Activated CD4-positive, alpha-beta T cell treated with anti-CD3 and anti-CD28 coated beads for 36 hours (primary cell): ENCODE measurements at regions of chr9 and their contacts with region 1.

Region 1: GRCh38 chr9:33881635-33882034 is 64.7 kb downstream of the UBE2R2 start:
- DNase-seq: no peak
- ATAC-seq: peak; percentile 79
- H3K4me3 Mint-ChIP-seq: peak overlapping the region; percentile 23
- H3K27ac Mint-ChIP-seq: peak overlapping the region; percentile 93
- H3K4me1 Mint-ChIP-seq: peaks cover 65% of the 10 kb centered on the region
- H3K27me3 Mint-ChIP-seq: no peaks in the 10 kb centered on the region

Region 2: GRCh38 chr9:33800886-33801285 is 80.7 kb before region 1 on chr9:
- CTCF ChIA-PET with region 1: no interaction called
- POLR2A ChIA-PET with region 1: no interaction called
- intact Hi-C with region 1: no loop called
- DNase-seq: no peak
- ATAC-seq: no peak
- H3K4me3 Mint-ChIP-seq: no peak overlapping the region
- H3K27ac Mint-ChIP-seq: no peak overlapping the region
- H3K4me1 Mint-ChIP-seq: no peaks in the 10 kb centered on the region
- H3K27me3 Mint-ChIP-seq: peaks cover 3% of the 10 kb centered on the region

Region 3: DNA sequence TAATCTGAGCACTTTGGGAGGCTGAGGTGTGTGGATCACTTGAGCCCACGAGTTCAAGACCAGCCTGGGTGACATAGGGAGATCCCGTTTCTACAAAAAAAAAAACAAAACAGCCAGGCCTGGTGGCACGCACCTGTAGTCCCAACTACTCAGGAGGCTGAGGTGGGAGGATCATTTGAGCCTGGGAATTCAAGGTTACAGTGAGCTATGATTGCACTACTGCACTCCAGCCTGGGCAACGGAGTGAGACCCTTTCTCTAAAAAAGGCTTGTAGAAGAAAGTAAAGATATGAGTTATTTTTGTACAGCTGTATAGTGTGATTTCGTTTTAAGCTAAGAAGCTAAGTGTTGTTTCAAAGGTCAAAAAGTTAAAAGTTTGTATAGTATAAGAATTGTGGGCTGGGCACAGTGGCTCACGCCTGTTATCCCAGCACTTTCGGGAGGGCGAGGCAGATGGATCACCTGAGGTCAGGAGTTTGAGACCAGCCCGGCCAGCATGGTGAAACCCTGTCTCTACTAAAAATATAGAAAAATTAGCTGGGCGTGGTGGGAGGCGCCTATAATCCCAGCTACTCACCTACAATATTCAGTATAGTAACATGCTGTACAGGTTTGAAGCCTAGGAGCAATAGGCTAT is 45.9 kb before region 1 on chr9:
- CTCF ChIA-PET with region 1: interaction called, 3 read pairs
- POLR2A ChIA-PET with region 1: no interaction called
- intact Hi-C with region 1: loop called in 1 of 2 experiments (anchors 1 kb)
- DNase-seq: no peak
- ATAC-seq: peak; percentile 8
- H3K4me3 Mint-ChIP-seq: no peak overlapping the region
- H3K27ac Mint-ChIP-seq: peak overlapping the region; percentile 83
- H3K4me1 Mint-ChIP-seq: peaks cover 44% of the 10 kb centered on the region
- H3K27me3 Mint-ChIP-seq: no peaks in the 10 kb centered on the region

Region 4: DNA sequence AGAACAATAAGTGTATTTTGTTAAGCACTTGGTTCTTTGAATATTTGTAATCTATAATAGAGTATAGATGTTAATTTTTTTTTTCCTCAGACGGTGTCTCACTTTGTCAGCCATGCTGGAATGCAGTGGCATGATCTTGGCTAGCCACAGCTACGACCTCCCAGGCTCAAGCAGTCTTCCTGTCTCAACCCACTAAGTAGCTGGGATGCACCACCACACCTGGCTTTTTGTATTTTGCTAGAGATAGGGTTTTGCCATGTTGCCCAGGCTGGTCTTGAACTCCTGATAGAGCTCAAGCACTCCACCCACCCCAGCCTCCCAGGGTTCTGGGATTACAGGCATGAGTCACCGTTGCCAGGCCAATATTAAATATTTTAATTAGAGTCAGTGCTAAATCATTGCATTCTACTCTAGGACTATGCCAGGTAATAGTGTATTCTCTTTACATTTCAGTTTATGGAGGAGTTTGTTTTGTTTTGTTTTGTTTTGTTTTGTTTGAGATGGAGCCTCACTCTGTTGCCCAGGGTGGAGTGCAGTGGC is 23.2 kb before region 1 on chr9:
- CTCF ChIA-PET with region 1: interaction called, 3 read pairs
- POLR2A ChIA-PET with region 1: no interaction called
- intact Hi-C with region 1: loop called in 1 of 2 experiments (anchors 2 kb)
- DNase-seq: no peak
- ATAC-seq: no peak
- H3K4me3 Mint-ChIP-seq: no peak overlapping the region
- H3K27ac Mint-ChIP-seq: no peak overlapping the region
- H3K4me1 Mint-ChIP-seq: peaks cover 28% of the 10 kb centered on the region
- H3K27me3 Mint-ChIP-seq: no peaks in the 10 kb centered on the region

Region 5: GRCh38 chr9:33893861-33894260 is 12.2 kb after region 1 on chr9:
- CTCF ChIA-PET with region 1: no interaction called
- POLR2A ChIA-PET with region 1: no interaction called
- intact Hi-C with region 1: no loop called
- DNase-seq: no peak
- ATAC-seq: no peak
- H3K4me3 Mint-ChIP-seq: no peak overlapping the region
- H3K27ac Mint-ChIP-seq: no peak overlapping the region
- H3K4me1 Mint-ChIP-seq: peaks cover 4% of the 10 kb centered on the region
- H3K27me3 Mint-ChIP-seq: no peaks in the 10 kb centered on the region

Region 6: GRCh38 chr9:34370970-34371880 is 489.6 kb after region 1 on chr9:
- CTCF ChIA-PET with region 1: no interaction called
- POLR2A ChIA-PET with region 1: no interaction called
- intact Hi-C with region 1: no loop called
- DNase-seq: peak; percentile 32
- ATAC-seq: peak; percentile 15
- H3K4me3 Mint-ChIP-seq: peak overlapping the region; percentile 22
- H3K27ac Mint-ChIP-seq: no peak overlapping the region
- H3K4me1 Mint-ChIP-seq: peaks cover 10% of the 10 kb centered on the region
- H3K27me3 Mint-ChIP-seq: no peaks in the 10 kb centered on the region